Ovary (tissue), 10 donors: ENCODE measurements at regions of chr7 and their contacts with region 1.

Region 1: DNA sequence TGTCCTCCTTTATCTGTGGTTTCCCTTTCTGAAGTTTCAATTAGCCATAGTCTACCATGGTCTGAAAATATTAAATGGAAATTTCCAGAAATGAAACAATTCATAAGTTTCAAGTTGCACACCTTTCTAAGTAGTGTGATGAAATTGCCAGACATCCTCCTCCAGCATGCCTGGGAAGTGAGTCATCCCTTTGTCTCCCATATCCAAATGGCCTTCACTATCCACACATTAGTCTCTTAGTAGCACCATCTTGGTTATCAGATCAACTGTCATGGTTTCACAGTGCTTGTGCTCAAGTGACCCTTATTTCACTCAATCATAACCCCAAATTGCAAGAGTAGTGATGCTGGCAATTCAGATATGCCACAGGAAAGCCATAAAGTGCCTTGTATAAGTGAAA is 83.4 kb upstream of the PPP1R9A start:
- DNase-seq: no peak
- H3K4me3 ChIP-seq: no peak overlapping the region
- H3K27ac ChIP-seq: no peak overlapping the region
- H3K4me1 ChIP-seq: no peaks in the 10 kb centered on the region
- H3K27me3 ChIP-seq: no peaks in the 10 kb centered on the region
- CTCF ChIP-seq: no peak
- EP300 ChIP-seq: no peak
- POLR2A ChIP-seq: no peak

Region 2: DNA sequence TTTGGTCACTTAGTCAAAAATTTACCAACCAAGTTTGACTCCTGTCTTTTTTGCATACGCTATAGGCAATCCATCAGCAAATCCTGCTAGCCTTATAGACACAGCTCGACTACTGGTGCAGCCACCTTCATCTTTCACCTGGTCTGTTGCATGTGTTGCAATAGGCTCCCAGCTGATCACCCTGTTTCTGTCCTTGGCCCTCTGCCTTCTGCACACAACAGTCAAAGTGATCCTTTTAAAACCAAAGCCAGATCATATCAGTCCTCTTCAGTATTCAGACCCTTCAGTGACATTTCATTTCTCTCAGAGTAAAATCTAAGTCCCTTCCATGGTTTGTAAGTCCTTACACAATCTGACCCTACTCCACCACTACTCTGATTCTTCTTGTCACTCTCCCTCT is 1976.6 kb before region 1 on chr7:
- intact Hi-C with region 1: loop called in 1 of 4 experiments (anchors 5 kb)
- DNase-seq: no peak
- H3K4me3 ChIP-seq: no peak overlapping the region
- H3K27ac ChIP-seq: no peak overlapping the region
- H3K4me1 ChIP-seq: no peaks in the 10 kb centered on the region
- H3K27me3 ChIP-seq: no peaks in the 10 kb centered on the region
- CTCF ChIP-seq: no peak
- EP300 ChIP-seq: no peak
- POLR2A ChIP-seq: no peak